CD8-positive, alpha-beta T cell (primary cell): ENCODE measurements at regions of chr9 and their contacts with region 1.

Region 1: DNA sequence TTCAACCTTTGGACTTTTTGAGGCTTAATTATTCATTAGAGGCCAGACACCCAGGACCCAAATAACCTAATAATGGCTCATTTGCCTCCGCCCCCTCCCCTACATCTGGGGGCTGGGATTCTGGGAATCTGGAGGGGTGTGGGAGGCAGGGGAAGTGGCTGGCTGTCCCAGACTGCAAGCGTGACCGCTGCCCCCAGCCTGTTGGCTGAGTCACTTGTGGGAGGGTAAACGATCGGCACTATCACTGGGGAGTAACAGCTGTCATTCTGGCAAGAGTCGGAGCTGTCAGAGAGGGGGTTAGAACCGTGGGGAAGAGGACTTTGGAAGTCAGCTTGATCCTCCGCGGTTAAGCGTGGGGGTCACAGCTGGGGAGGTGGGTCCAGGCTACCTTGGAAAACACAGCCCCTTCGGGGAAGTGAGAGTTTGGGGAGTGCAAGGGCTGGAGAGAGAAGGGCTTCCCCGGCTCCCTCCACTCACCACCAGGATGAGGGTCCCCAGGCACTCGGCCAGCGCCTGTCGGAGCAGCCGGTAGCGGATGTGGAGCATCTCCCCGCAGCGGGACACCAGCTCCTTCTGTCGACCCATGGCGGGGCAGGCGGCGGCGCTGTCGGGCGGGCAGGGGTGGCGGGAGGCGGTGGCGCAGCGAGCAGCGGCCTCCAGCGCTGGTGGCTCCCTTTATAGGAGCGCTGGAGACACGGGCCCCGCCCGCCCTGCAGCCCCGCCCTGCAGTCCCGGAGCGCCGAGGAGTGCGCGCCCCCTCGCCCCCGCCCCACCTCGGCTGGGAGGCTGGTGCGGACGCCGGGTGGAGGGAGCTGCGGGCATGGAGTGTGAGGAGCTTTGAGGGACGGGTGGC is at the start of gene AQP3:
- DNase-seq: peak; percentile 49 to 88 (median 76)
- ATAC-seq: peak; percentile 53
- H3K4me3 ChIP-seq: peak within 1 kb of the TSS; percentile 58 to 79
- H3K4me3 Mint-ChIP-seq: peak within 1 kb of the TSS; percentile 95
- H3K27ac ChIP-seq: peak within 1 kb of the TSS; percentile 62 to 81
- H3K27ac Mint-ChIP-seq: peak within 1 kb of the TSS; percentile 96
- H3K4me1 ChIP-seq: peaks cover 39% of the 10 kb centered on the region
- H3K4me1 Mint-ChIP-seq: peaks cover 52% of the 10 kb centered on the region
- H3K27me3 ChIP-seq: no peaks in the 10 kb centered on the region
- H3K27me3 Mint-ChIP-seq: no peaks in the 10 kb centered on the region
- CTCF ChIP-seq: no peak
- total RNA-seq, gene AQP3: 48.0 to 50.3 TPM

Region 2: DNA sequence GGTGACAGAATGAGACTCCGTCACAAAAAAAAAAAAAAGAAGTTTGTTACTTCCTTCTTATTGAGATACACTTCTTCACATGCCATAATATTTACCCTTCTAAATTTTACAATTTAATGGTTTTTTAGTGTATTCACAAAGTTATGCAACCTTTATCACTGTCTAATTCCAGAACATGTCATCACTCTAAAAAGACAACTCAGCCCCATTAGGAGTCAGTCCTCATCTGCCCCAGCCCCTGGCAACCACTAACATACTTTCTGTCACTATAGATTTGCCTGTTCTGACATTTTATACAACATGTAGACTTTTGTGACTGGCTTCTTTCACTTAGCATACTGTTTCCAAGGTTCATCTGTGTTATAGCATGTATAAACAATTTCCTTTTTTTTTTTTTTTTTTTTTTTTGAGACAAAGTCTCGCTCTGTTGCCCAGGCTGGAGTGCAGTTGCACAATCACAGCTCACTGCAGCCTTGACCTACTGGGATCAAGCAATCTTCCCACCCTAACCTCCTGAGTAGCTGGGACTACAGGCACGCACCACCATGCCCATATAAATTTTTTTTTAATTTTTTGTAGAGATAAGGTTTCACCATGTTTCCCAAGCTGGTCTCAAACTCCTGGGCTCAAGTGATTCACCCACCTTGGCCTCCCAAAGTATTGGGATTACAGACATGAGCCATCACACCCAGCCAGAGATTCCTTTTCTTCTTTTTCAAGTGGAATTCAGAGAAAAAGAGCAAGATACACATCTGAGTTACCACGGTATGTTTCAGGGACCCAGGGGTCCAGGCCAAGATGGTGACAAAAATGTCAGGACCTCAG is 17.7 kb before region 1 on chr9:
- CTCF ChIA-PET with region 1: interaction called, 3 read pairs
- POLR2A ChIA-PET with region 1: no interaction called
- intact Hi-C with region 1: loop called in 1 of 2 experiments (anchors 2 kb)
- DNase-seq: no peak
- ATAC-seq: no peak
- H3K4me3 ChIP-seq: no peak overlapping the region
- H3K4me3 Mint-ChIP-seq: no peak overlapping the region
- H3K27ac ChIP-seq: no peak overlapping the region
- H3K27ac Mint-ChIP-seq: no peak overlapping the region
- H3K4me1 ChIP-seq: no peaks in the 10 kb centered on the region
- H3K4me1 Mint-ChIP-seq: no peaks in the 10 kb centered on the region
- H3K27me3 ChIP-seq: no peaks in the 10 kb centered on the region
- H3K27me3 Mint-ChIP-seq: no peaks in the 10 kb centered on the region
- CTCF ChIP-seq: no peak

Region 3: DNA sequence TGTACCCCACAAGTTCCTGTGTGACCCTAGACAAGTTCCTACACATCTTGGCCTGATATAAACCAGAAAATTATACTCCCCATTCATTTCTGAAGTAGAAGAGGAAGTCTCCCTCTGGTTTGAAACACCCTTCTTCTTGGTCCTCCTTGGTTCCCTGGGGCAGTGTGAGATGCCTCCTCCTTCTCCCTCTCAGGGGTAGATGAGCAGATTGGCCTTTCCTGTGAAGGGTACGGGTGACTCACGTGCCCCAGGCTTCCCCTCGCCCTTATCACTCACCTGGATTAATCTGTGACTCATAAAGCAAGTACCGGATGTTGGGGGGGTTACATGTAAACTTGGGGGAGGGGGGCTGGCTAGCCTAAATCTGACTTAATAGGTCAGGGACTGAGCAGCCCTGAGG is 11.3 kb after region 1 on chr9:
- CTCF ChIA-PET with region 1: interaction called, 194 read pairs
- POLR2A ChIA-PET with region 1: interaction called, 17 read pairs
- intact Hi-C with region 1: loop called in 1 of 2 experiments (anchors 1 kb)
- DNase-seq: peak in 8 of 9 experiments; percentile 53 to 80 (median 72)
- ATAC-seq: peak; percentile 84
- H3K4me3 ChIP-seq: no peak overlapping the region
- H3K4me3 Mint-ChIP-seq: peak overlapping the region; percentile 56
- H3K27ac ChIP-seq: peak overlapping the region; percentile 7 to 70
- H3K27ac Mint-ChIP-seq: peak overlapping the region; percentile 93
- H3K4me1 ChIP-seq: peaks cover 53% of the 10 kb centered on the region
- H3K4me1 Mint-ChIP-seq: peaks cover 51% of the 10 kb centered on the region
- H3K27me3 ChIP-seq: no peaks in the 10 kb centered on the region
- H3K27me3 Mint-ChIP-seq: no peaks in the 10 kb centered on the region
- CTCF ChIP-seq: no peak

Region 4: DNA sequence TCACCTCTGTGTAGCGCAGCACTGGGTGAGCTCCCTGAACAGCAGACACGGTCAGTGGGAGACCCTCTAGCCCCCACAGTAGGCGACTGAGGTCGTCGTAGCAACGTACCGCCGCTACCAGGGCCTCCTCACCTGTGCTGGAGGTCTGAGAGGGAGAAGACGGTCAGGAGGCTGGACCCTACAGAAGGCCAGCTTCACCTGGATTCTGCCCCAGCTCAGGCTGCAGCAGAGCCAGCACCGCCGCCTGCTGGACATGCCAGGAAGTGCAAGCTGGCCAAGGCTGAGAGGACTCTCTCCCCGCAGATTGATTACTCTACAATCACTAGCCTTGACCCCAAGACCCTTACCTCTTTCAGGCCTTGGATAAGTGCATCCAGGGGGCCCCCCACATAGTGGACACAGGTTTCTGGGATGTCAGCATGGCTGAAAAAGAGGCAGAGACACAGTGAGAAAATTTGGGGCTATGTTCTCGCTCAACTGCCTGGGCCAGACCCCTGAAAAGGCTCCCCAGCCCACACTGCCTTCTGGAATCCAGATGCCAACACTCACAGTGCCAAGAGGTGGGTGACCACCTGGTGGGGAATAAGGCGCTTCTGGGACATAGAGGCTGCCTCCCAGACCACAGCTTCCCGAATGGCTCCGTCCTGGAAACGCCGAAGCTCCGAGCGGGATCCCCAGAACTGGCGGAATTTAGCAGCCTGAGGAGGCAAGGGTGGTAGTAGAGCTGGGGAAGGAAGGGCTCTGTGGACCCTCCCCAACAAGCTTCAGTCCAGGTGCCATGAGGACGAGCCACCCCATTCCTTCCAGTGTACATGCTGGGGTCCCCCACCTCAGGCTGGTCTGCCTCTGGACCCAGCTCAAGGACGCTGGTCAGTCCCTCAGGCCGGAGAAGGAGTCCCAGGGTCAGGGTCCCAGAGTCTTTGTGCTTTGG is 19.7 kb after region 1 on chr9:
- CTCF ChIA-PET with region 1: interaction called, 194 read pairs
- POLR2A ChIA-PET with region 1: interaction called, 18 read pairs
- intact Hi-C with region 1: loop called in 1 of 2 experiments (anchors 2 kb)
- DNase-seq: peak; percentile 42 to 85 (median 72)
- ATAC-seq: peak; percentile 93
- H3K4me3 ChIP-seq: no peak overlapping the region
- H3K4me3 Mint-ChIP-seq: no peak overlapping the region
- H3K27ac ChIP-seq: no peak overlapping the region
- H3K27ac Mint-ChIP-seq: peak overlapping the region; percentile 22
- H3K4me1 ChIP-seq: peaks cover 5% of the 10 kb centered on the region
- H3K4me1 Mint-ChIP-seq: peaks cover 10% of the 10 kb centered on the region
- H3K27me3 ChIP-seq: no peaks in the 10 kb centered on the region
- H3K27me3 Mint-ChIP-seq: no peaks in the 10 kb centered on the region
- CTCF ChIP-seq: peak; percentile 85

Region 5: DNA sequence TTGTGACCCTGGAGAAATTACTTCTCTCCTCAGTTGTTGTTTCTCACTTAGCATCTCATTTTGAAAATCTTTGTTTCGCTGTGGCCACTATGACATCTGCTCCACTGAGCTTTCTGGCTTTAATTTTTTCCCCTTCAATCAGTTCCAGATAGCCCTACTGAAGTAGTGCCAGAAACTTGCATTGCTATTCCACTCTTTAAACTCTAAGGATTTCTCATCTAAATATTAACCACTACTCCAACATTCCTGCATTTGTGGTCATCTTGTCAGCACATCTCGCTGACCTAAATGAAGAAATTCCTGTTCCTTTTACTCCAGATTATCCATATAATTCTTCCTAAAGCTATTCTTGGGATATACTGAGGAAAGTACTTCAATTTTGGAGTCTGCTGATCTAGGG is 41.9 kb after region 1 on chr9:
- CTCF ChIA-PET with region 1: no interaction called
- POLR2A ChIA-PET with region 1: no interaction called
- intact Hi-C with region 1: no loop called
- DNase-seq: no peak
- ATAC-seq: no peak
- H3K4me3 ChIP-seq: no peak overlapping the region
- H3K4me3 Mint-ChIP-seq: no peak overlapping the region
- H3K27ac ChIP-seq: no peak overlapping the region
- H3K27ac Mint-ChIP-seq: no peak overlapping the region
- H3K4me1 ChIP-seq: no peaks in the 10 kb centered on the region
- H3K4me1 Mint-ChIP-seq: peaks cover 2% of the 10 kb centered on the region
- H3K27me3 ChIP-seq: no peaks in the 10 kb centered on the region
- H3K27me3 Mint-ChIP-seq: peaks cover 2% of the 10 kb centered on the region
- CTCF ChIP-seq: no peak

Region 6: GRCh38 chr9:34310205-34310604 is 863.0 kb after region 1 on chr9:
- CTCF ChIA-PET with region 1: no interaction called
- POLR2A ChIA-PET with region 1: no interaction called
- intact Hi-C with region 1: no loop called
- DNase-seq: no peak
- ATAC-seq: no peak
- H3K4me3 ChIP-seq: no peak overlapping the region
- H3K4me3 Mint-ChIP-seq: no peak overlapping the region
- H3K27ac ChIP-seq: no peak overlapping the region
- H3K27ac Mint-ChIP-seq: no peak overlapping the region
- H3K4me1 ChIP-seq: no peaks in the 10 kb centered on the region
- H3K4me1 Mint-ChIP-seq: no peaks in the 10 kb centered on the region
- H3K27me3 ChIP-seq: no peaks in the 10 kb centered on the region
- H3K27me3 Mint-ChIP-seq: no peaks in the 10 kb centered on the region
- CTCF ChIP-seq: no peak